ENCODE measurements at regions of chr6 and their contacts with region 1.

Region 1: DNA sequence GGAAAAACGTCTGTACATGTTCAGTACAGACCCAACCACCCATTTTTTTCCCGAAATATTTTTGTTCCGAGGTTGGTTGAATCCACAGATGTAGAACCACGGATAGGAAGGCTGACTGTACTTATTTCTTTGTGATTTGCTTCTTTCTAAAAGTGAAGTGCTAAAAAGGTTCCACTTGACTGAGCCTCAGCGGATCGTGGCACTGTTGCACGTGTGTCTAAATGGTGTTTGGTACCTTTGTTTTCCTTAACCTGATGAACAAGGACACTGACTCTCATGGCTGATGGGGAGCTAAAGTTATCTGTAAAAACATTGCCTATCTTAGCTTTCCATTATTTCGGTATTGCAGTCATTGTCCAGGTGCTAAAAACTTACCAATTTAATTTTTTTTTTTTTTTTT is 6.2 kb downstream of the BPHL start:
- DNase-seq: no peak
- ATAC-seq: no peak
- H3K4me3 ChIP-seq: no peak overlapping the region
- H3K27ac ChIP-seq: no peak overlapping the region
- H3K4me1 ChIP-seq: peaks cover 28% of the 10 kb centered on the region
- H3K27me3 ChIP-seq: no peaks in the 10 kb centered on the region
- CTCF ChIP-seq: no peak
- EP300 ChIP-seq: no peak
- POLR2A ChIP-seq: no peak
- RAD21 ChIP-seq: no peak

Region 2: DNA sequence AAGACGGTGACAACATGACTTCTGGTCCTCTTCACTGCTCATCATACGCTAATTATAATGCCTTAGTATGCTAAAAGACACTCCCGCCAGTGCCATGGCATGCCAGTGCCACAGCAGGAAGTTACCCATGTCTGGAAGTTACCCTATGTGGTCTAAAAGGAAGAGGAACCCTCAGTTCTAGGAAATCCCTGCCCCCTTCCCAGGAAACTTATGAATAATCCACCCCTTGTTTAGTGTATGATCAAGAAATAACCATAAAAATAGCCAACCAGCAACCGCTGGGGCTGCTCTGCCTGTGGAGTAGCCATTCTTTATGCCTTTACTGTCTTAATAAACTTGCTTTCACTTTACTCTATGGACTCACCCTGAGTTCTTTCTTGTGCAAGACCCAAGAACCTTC is 205.7 kb before region 1 on chr6:
- CTCF ChIA-PET with region 1: no interaction called
- POLR2A ChIA-PET with region 1: no interaction called
- in situ Hi-C with region 1: no loop called
- intact Hi-C with region 1: no loop called
- DNase-seq: no peak
- ATAC-seq: no peak
- H3K4me3 ChIP-seq: no peak overlapping the region
- H3K27ac ChIP-seq: no peak overlapping the region
- H3K4me1 ChIP-seq: peaks cover 28% of the 10 kb centered on the region
- H3K27me3 ChIP-seq: peaks cover 0 to 40% of the 10 kb centered on the region in 2 experiments; a peak in 4 of 5 replicates
- CTCF ChIP-seq: no peak
- EP300 ChIP-seq: no peak
- POLR2A ChIP-seq: no peak
- RAD21 ChIP-seq: no peak

Region 3: GRCh38 chr6:3157131-3157927 is 32.7 kb after region 1 on chr6 and contains the start of gene TUBB2A:
- CTCF ChIA-PET with region 1: interaction called, 12 read pairs
- POLR2A ChIA-PET with region 1: interaction called, 5 read pairs
- in situ Hi-C with region 1: no loop called
- intact Hi-C with region 1: loop called (anchors 1 kb)
- DNase-seq: peak; percentile 56
- ATAC-seq: peak; percentile 78
- H3K4me3 ChIP-seq: peak within 1 kb of the TSS; percentile 63 to 91 (median 70)
- H3K27ac ChIP-seq: peak within 1 kb of the TSS; percentile 57
- H3K4me1 ChIP-seq: peaks cover 45% of the 10 kb centered on the region
- H3K27me3 ChIP-seq: no peaks in the 10 kb centered on the region
- CTCF ChIP-seq: peak; percentile 76
- EP300 ChIP-seq: peak in 1 of 2 experiments; percentile 14; a peak in 1 of 4 replicates
- POLR2A ChIP-seq: peak; percentile 78 to 96
- RAD21 ChIP-seq: peak; percentile 93
- total RNA-seq, gene TUBB2A: 35.3 and 38.1 TPM in 2 replicates

Region 4: DNA sequence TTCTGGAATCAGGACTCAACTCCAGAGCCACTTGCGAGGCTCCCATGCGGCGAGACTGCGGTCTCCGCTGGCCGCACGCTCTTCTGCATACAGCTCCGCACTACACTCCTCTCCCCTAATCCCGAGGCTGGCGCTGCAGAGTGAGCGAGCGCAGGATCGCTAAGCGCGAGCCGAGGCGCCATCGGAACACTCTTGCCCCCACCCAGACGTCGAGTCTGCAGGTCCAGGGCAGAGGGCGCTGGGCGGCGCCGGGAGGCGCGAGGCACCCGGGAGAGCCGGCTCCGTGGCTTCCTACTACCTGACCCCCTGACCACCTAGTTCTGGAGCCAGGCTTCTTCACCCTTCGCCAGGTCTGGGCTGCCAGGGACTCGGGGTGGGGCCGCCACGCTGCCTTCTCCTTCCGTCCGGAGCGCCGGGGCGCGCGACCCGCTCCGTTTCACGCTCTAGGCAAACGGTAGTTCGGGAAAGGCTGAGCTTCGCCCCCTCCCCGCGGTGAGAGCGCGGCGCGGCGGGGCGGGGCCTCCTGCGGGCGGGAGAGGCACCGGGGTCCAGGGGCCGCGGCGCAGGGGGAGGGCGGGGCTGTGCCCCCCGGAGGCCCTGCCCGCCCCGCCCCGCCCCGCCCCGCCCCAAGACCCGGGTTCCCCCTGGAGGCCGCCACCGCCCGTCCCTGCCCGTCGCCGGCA is 38.0 kb after region 1 on chr6:
- CTCF ChIA-PET with region 1: interaction called, 12 read pairs
- POLR2A ChIA-PET with region 1: interaction called, 5 read pairs
- in situ Hi-C with region 1: no loop called
- intact Hi-C with region 1: loop called (anchors 1 kb)
- DNase-seq: peak; percentile 80
- ATAC-seq: peak; percentile 91
- H3K4me3 ChIP-seq: peak overlapping the region; percentile 67 to 84 (median 72)
- H3K27ac ChIP-seq: peak overlapping the region; percentile 89
- H3K4me1 ChIP-seq: peaks cover 71% of the 10 kb centered on the region
- H3K27me3 ChIP-seq: no peaks in the 10 kb centered on the region
- CTCF ChIP-seq: peak; percentile 58
- EP300 ChIP-seq: no peak; a peak in 1 of 4 replicates
- POLR2A ChIP-seq: peak; percentile 66 to 91
- RAD21 ChIP-seq: peak; percentile 81

Region 5: DNA sequence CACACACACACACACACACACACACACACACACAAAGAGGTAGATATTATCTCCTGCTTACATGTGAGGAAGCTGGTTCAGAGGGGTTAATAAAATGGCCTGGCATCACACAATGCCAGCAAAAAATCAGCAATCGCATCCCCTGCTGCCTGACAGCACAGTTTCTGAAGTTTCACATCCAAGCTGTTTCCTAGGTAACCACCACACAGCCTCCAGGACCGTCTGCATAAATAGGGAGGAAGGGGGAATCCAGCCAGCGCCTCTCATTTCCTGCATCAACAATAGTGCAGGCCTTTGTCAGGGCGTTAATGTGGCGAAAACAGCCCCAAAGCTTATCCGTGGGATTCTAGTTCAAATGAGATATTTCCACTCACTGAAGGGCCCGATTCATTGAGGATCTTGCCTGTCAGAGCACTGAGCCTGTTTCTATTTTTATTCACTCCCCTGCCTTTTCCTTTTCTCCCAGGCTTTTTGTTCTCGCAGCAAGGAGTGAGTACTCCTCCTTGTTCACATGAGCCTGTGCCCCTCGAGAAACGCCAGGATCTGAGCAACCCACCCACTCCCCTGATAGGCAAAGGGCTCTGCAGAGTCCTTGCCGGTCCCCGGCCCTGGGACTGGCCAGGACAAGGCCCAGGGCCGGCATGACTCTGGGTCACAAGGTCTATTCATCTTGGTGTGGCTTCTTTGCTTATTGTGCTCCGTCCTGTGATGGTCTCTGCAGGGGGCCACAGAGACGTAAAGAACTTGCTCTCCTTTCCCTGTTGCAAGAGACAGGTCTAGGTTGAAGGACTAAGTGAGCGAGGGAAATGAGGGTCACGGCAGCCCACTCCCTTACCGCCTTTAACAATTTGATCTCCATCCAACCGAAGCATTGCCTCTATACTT is 70.1 kb after region 1 on chr6:
- CTCF ChIA-PET with region 1: interaction called, 3 read pairs
- POLR2A ChIA-PET with region 1: no interaction called
- in situ Hi-C with region 1: no loop called
- intact Hi-C with region 1: loop called (anchors 5 kb)
- DNase-seq: no peak
- ATAC-seq: peak; percentile 75
- H3K4me3 ChIP-seq: peak overlapping the region; percentile 46 to 67 (median 59)
- H3K27ac ChIP-seq: peak overlapping the region; percentile 66
- H3K4me1 ChIP-seq: peaks cover 39% of the 10 kb centered on the region
- H3K27me3 ChIP-seq: peaks cover 0 to 4% of the 10 kb centered on the region in 2 experiments; a peak in 1 of 5 replicates
- CTCF ChIP-seq: no peak
- EP300 ChIP-seq: no peak
- POLR2A ChIP-seq: 0 out of 4 replicates have a peak, but pooled peaks of 1 of the 2 experiments have one; percentile 13
- RAD21 ChIP-seq: no peak

Region 6: DNA sequence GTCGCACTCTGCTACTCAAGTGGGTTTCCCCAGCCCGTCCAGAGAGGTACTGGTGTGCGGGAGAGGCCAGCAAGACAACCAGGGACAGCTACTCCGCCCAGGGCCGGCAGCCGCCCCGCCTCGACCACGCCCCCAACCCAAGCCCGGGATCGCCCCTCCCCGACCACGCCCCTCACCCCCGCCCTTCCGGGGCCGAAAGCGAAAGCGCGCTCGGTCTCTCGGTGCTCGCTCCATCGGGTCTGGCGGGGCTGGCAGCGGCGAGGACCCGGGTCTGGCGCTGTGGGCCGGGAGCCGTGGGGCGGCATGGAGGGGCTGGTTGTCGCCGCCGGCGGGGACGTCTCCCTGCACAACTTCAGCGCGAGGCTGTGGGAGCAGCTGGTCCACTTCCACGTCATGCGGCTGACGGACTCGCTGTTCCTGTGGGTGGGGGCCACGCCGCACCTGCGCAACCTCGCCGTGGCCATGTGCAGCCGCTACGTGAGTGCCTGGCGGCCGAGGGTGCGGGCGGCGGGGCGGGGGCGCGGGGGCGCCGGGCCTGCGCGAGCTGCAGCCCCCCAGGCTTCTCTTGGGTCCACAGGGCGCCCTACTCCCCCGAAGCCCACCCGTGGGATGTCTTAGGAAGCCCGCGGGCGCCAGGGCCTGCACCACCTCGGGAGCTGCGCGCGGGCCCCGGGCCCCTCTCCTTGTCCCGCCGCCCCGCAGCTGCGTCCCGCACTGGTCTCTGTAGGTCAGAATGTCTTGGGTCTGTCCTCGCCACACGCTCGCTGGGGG is 134.2 kb after region 1 on chr6 and contains the start of gene PSMG4:
- CTCF ChIA-PET with region 1: interaction called, 5 read pairs
- POLR2A ChIA-PET with region 1: no interaction called
- in situ Hi-C with region 1: no loop called
- intact Hi-C with region 1: loop called (anchors 2 kb)
- DNase-seq: peak; percentile 84
- ATAC-seq: peak; percentile 89
- H3K4me3 ChIP-seq: peak within 1 kb of the TSS; percentile 92 to 96 (median 96)
- H3K27ac ChIP-seq: peak within 1 kb of the TSS; percentile 70
- H3K4me1 ChIP-seq: peaks cover 50% of the 10 kb centered on the region
- H3K27me3 ChIP-seq: peaks cover 0 to 32% of the 10 kb centered on the region in 2 experiments; a peak in 3 of 5 replicates
- CTCF ChIP-seq: peak; percentile 36
- EP300 ChIP-seq: no peak; a peak in 2 of 4 replicates
- POLR2A ChIP-seq: peak; percentile 79 to 89
- RAD21 ChIP-seq: peak; percentile 37; the same call in 1 of the 2 replicates
- total RNA-seq, gene PSMG4: 24.5 and 32.8 TPM in 2 replicates

Region 7: DNA sequence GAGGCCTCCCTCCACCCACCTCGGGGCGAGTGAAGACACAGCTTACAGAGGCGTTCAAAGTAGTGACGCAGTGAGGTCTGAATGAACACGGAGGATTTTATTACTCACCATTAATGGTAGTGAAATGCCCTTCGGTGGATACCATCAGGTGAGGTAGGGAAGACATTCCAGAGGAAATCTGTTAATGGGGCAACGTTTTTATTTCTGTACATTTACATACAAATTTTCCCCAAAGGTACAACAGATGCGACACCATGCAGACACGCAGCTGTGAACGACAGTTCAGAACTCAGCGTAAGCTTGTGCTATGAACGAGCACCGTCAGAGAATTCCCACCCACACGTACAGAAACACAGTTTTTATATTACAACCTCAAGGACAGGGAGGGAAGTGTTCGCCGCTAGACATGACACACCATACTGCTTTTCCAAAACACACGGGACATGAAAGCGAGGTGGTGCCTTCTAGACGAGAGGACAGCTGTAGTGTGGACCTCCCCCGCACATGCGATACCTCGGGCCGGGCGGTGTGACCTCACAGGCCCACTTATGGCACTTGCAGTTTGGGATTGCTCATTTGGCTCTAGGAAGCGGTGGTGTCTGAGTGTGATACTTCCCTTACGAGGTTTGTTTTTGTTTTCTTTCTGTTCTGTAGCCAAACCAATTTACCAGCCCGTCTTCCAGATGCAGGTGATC is 144.8 kb after region 1 on chr6:
- CTCF ChIA-PET with region 1: no interaction called
- POLR2A ChIA-PET with region 1: no interaction called
- in situ Hi-C with region 1: no loop called
- intact Hi-C with region 1: no loop called
- DNase-seq: no peak
- ATAC-seq: no peak
- H3K4me3 ChIP-seq: no peak overlapping the region
- H3K27ac ChIP-seq: no peak overlapping the region
- H3K4me1 ChIP-seq: no peaks in the 10 kb centered on the region
- H3K27me3 ChIP-seq: no peaks in the 10 kb centered on the region
- CTCF ChIP-seq: no peak
- EP300 ChIP-seq: no peak
- POLR2A ChIP-seq: no peak
- RAD21 ChIP-seq: no peak

Region 8: DNA sequence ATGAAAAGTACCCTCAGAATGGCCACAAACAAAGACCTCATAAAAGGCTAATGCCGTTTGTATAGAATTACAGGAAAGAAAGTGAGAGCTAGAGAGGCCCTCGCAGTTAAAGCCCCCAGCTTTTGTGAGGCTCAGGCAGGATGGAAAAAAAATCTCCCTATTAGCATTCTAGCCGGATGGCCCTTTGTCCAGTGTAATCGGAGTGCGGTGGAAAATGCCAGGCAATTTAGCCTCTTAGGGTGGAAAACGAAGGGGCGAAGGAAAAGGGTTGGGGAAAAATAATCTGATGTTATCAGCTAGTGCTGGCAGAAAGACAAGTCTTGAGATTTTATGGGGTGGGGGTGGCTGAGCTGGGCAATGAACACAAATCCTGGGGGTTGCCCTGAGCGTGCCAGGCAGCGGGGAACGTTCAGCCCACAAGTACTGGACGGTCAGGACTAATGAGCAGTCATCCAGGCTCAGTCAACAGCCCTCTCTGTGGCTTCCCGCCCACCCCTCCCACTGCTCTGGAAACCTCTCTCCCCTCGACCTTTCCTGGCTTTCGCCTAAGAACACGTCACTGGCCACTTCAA is 226.5 kb after region 1 on chr6:
- CTCF ChIA-PET with region 1: no interaction called
- POLR2A ChIA-PET with region 1: no interaction called
- in situ Hi-C with region 1: no loop called
- intact Hi-C with region 1: no loop called
- DNase-seq: no peak
- ATAC-seq: no peak
- H3K4me3 ChIP-seq: no peak overlapping the region
- H3K27ac ChIP-seq: no peak overlapping the region
- H3K4me1 ChIP-seq: peaks cover 41% of the 10 kb centered on the region
- H3K27me3 ChIP-seq: no peaks in the 10 kb centered on the region
- CTCF ChIP-seq: no peak
- EP300 ChIP-seq: no peak
- POLR2A ChIP-seq: no peak
- RAD21 ChIP-seq: no peak

Region 9: DNA sequence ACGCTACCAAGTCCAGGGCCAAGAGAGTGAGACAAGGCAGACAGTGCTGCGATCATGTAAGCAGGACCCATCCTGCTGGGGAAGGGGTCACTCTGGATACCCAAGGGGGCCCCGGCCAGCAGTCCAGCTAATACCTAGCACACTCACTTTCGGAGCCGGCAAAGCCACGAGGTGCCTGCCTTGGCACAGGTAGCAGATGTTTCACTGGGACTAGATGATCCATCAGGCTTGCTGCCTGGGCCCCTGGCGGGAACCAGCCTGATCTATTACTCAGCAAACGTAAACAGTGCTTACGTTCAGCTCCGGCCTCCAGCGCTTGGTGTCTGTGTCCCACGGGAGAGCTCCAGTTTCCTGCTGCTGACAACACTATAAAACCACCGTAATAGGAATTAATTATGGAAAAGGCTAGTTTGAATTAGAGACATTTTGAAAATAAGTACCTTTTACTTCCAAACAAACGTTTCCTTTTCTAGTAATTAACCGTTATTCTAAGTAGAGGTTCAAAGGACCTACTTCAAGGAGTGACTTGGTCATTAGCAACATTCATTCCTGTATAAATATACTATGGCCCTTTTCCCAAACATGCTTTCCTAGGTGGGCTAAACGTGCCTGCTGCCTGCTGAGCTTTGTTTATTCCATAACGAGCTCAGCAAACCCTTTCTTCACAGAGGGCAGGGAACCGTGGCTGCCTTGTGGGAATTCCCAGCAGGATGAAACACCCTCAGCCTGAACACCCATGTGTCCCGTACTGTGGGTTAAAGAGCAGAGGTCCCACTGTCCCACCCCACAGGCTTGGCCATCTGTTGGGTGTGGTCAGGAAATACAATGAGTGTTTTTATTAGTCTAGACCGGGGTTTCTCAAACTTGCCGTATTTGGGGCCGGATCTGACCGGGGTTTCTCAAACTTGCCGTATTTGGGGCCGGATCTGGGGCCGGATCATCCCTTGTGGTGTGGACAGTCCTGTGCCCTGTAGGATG is 313.8 kb after region 1 on chr6:
- CTCF ChIA-PET with region 1: no interaction called
- POLR2A ChIA-PET with region 1: no interaction called
- in situ Hi-C with region 1: no loop called
- intact Hi-C with region 1: no loop called
- DNase-seq: peak; percentile 68
- ATAC-seq: peak; percentile 85
- H3K4me3 ChIP-seq: peak overlapping the region in 1 of 3 experiments; percentile 5; a peak in 1 of 6 replicates
- H3K27ac ChIP-seq: peak overlapping the region; percentile 28
- H3K4me1 ChIP-seq: peaks cover 44% of the 10 kb centered on the region
- H3K27me3 ChIP-seq: no peaks in the 10 kb centered on the region
- CTCF ChIP-seq: no peak
- EP300 ChIP-seq: no peak
- POLR2A ChIP-seq: no peak
- RAD21 ChIP-seq: no peak

Measured in HepG2 (cell line).